ENCODE measurements at regions of chr3 and their contacts with region 1.

Region 1: DNA sequence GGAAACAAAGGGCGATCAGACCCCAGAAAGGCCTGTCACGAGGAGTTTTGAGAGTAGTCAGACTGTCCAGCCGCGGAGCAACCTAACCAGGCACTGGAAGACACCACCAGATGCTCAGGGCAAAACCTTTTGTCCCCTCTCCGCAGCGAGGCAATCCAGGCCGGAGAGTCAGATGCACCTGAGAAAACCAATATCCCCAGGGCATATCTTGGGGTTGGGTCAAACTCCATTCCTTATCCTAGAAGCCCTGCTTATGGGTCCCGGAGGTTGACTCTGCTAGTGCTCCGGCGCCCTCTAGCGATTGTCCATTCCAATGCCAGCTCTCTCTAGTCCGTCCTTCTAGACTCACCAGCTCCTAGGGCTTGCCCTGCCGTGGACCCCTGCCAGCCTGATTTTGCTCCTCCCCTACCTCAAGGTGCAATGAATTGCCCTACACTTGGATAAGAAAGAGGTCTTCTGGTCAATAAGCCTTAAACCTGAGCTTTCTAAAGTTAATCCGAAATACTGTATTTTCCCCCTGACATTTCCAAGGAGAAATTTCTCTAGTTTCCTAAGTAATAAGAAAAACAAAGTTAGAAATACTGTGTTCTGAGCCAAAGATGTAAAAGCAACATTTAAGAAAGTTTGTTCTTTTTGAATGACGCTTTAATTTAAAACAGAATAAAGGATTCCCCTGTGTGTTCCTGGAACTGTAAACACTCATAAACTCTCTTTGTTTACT is 5.5 kb downstream of the CPNE4 start:
- DNase-seq: peak; percentile 86
- ATAC-seq: peak; percentile 79

Region 2: DNA sequence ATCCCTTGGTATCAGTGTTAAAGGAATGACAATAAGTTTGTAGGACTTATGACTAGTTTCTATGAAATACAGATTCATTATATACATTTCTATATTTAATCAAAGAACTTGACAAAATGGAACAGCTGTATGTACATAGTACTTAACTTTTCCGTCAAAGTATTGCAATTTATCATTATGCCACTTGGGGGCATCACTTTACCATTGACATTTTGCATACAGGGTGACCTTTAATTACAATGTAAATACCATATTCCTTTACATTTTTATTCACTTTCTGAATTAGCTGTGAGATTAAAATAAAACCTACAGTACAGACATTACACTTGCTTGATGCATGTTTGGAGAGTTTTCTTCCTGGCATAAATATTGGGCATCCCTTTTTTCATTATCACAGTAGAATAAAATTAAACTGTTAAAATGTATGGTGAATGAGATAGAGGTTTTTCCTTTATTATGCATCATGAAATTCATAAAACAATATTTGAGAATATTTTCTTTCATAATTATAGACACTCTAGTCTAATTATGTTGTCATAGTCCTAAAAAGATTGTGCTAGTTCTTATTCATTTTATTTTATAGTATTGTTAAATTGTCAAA is 995.8 kb before region 1 on chr3:
- intact Hi-C with region 1: loop called (anchors 10 kb)
- DNase-seq: no peak
- ATAC-seq: no peak

Region 3: GRCh38 chr3:131795390-131796065 is 233.8 kb before region 1 on chr3:
- intact Hi-C with region 1: loop called (anchors 2 kb)
- DNase-seq: no peak
- ATAC-seq: no peak

Region 4: DNA sequence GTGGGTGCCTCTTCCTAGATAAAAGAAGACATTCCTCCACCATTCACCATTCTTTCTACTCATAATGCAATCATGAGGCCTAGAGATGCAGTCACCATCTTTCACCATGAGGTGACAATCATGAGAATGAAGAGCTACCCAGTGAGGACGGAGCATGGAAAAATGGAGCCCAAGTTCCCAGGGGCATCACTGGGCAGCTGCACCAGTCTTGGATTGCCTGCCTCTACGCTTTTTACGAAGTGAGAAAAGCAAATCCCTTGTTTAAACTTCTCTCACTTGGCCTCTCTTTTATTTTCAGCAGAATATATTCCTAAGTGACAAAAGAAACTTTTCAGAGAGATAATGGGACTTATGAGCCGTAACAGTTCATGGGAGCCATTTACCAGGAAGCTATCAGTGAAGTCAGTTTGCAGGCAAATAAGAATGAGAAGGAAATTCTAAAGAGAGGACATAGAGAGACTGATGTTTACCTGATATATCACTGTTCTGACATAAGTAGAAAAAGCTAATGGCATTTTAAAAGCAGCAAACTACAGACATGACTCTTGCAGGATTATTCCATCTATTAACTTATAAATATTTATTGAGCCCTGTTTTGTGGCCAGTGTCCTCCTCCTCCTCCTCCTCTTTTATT is 95.4 kb after region 1 on chr3:
- intact Hi-C with region 1: no loop called
- DNase-seq: no peak
- ATAC-seq: no peak

Measured in Right ventricle myocardium inferior (tissue), 1 donor.